ENCODE measurements at regions of chr10 and their contacts with region 1.

Region 1: DNA sequence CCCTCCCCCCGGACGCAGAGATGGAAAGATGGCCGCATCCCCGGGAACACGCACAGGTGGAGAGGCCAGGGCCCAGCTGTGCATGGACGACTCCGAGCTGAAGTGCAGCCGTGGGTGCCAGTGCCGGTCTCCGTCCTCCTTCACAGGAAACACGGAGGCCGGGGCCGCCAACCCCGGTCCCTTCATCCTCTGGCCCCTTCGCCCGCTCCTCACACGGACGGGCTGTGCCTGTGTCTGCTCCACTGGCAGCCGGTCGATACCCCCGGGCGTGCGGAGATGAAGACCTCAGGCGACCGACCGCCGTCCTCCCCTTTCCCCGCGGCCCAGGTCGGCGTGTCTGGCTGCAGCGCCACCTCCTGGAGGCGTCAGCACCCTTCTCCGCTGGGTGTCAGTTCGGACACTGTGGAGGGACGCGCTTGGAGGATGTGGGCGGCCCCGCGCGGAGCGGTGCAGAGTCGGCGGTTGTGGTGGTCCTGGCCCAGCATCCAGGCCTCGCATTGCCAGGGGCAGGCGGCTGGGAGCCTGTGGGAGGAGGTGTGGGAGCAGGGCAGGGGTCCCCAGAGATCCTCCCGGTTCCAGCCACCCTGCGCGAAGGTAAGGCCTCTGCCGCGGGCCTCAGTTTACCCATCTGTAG is 9.9 kb downstream of the ZNF511 start:
- DNase-seq: peak in 8 of 9 donors; percentile 38 to 78 (median 52)
- ATAC-seq: peak; percentile 96
- H3K4me3 ChIP-seq: peak overlapping the region; percentile 41
- H3K4me3 Mint-ChIP-seq: peak overlapping the region; percentile 34 to 77 (median 70)
- H3K27ac ChIP-seq: no peak overlapping the region
- H3K27ac Mint-ChIP-seq: peak overlapping the region in 1 of 9 donors; percentile 49
- H3K4me1 ChIP-seq: no peaks in the 10 kb centered on the region
- H3K4me1 Mint-ChIP-seq: peaks cover 0 to 13% (median 11%) of the 10 kb centered on the region in 7 donors
- H3K27me3 ChIP-seq: no peaks in the 10 kb centered on the region
- H3K27me3 Mint-ChIP-seq: peaks cover 0 to 15% (median 6%) of the 10 kb centered on the region in 5 donors

Region 2: DNA sequence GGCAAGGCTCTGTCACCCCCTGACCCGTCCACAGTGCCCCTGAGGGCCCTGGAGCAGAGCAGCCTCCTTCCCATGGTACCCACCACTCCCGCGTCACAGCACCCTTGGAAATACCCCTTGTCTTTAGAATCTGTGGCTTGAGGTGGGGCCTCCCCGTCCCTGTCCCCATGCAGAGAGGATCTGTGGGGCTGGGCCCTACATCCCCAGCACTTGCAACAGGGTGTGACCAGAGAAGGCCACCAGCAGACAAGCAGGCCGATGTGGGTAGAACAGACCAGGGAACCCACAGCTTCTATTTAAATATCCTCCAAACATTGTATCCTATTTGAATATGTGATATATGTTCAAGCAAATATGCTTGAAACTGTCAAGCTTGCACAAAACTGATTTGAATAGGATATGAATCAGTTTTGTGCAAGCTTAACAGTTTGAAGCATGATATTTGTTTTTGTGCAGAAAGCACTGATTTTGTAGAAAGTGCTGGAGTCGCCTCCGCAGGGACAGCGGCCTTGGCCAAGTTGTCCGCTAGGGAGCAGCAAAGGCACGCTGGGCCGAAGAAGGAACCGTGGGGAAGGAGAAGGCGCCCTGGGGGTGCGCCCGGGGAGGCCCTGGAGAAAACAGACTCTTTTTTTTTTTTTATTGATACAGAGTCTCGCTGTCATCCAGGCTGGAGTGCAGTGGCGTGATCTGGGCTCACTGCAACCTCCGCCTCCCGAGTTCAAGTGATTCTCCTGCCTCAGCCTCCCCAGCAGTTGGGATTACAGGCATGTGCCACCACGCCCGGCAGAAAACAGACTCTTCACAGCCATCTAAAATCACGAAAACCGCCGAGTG is 378.4 kb before region 1 on chr10:
- CTCF ChIA-PET with region 1: no interaction called
- POLR2A ChIA-PET with region 1: no interaction called
- intact Hi-C with region 1: loop called in 1 of 2 experiments (anchors 5 kb)
- DNase-seq: peak in 1 of 9 donors; percentile 43
- ATAC-seq: peak; percentile 49
- H3K4me3 ChIP-seq: no peak overlapping the region
- H3K4me3 Mint-ChIP-seq: peak overlapping the region in 3 of 10 donors; percentile 45 to 53 (median 47)
- H3K27ac ChIP-seq: no peak overlapping the region
- H3K27ac Mint-ChIP-seq: no peak overlapping the region
- H3K4me1 ChIP-seq: no peaks in the 10 kb centered on the region
- H3K4me1 Mint-ChIP-seq: peaks cover 0 to 10% (median 5%) of the 10 kb centered on the region in 7 donors
- H3K27me3 ChIP-seq: no peaks in the 10 kb centered on the region
- H3K27me3 Mint-ChIP-seq: peaks cover 41 to 60% (median 51%) of the 10 kb centered on the region in 5 donors

Region 3: DNA sequence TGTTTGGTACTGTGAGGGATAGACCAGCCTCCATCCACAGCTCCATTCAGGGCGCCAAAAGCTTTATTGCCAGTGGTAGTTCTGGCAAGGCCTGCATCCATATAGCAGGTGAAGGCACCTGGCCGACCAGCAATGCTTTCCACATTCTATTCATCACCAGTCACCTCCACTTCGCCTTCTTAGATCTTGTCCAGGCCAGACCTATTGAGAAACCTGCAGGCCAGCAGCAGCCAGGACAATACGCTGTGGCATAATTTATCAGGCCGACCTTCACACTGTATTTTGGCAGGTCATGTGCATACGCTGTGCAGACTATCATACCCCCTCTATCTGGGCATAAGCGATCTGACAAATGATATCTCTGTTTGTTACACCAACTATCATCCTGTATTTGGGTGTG is 173.8 kb before region 1 on chr10:
- CTCF ChIA-PET with region 1: interaction called, 6 read pairs
- POLR2A ChIA-PET with region 1: no interaction called
- intact Hi-C with region 1: loop called (anchors 1 kb)
- DNase-seq: no peak
- ATAC-seq: no peak
- H3K4me3 ChIP-seq: no peak overlapping the region
- H3K4me3 Mint-ChIP-seq: no peak overlapping the region
- H3K27ac ChIP-seq: no peak overlapping the region
- H3K27ac Mint-ChIP-seq: no peak overlapping the region
- H3K4me1 ChIP-seq: no peaks in the 10 kb centered on the region
- H3K4me1 Mint-ChIP-seq: peaks cover 4 to 10% (median 6%) of the 10 kb centered on the region in 7 donors
- H3K27me3 ChIP-seq: no peaks in the 10 kb centered on the region
- H3K27me3 Mint-ChIP-seq: peaks cover 43 to 61% (median 56%) of the 10 kb centered on the region in 5 donors

Region 4: DNA sequence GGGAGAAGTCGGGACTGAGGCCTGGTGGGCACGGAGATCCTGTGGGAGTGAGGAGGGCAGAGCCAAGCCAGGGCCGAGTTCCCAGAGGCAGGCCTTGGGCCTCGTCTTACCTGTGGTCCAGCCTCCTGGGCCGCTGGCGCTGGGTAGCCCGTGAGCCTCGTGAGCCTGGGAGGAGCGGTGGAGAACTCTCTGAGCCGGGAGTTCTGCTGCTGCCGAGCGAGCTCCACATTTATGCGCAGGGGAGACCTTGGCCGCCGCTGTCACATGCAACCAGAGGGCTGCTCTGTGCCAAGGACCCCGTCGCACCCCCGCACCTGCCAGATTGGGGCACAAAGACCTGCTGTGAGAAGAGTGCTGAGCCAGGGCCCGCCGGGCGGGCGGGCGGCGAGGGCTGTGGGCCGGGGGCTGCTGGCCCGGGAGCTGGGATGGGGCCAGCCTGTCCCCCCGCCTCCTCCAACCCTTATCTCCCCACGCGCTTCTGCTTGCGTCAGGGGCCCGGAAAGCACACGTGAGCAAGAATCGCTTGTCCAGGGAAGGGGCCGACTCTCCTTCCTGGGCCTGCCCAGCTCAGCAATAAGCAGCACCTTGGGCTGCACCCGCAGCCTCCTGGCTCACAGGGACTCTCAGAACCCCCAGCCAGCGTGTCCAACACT is 70.8 kb before region 1 on chr10:
- CTCF ChIA-PET with region 1: no interaction called
- POLR2A ChIA-PET with region 1: no interaction called
- intact Hi-C with region 1: loop called in 1 of 2 experiments (anchors 1 kb)
- DNase-seq: no peak
- ATAC-seq: no peak
- H3K4me3 ChIP-seq: no peak overlapping the region
- H3K4me3 Mint-ChIP-seq: no peak overlapping the region
- H3K27ac ChIP-seq: no peak overlapping the region
- H3K27ac Mint-ChIP-seq: no peak overlapping the region
- H3K4me1 ChIP-seq: no peaks in the 10 kb centered on the region
- H3K4me1 Mint-ChIP-seq: peaks cover 0 to 11% (median 0%) of the 10 kb centered on the region in 7 donors
- H3K27me3 ChIP-seq: peaks cover 0 to 3% of the 10 kb centered on the region in 2 donors
- H3K27me3 Mint-ChIP-seq: peaks cover 5 to 16% (median 9%) of the 10 kb centered on the region in 5 donors